ENCODE measurements at regions of chr17 and their contacts with region 1.

Region 1: GRCh38 chr17:60577147-60577915 is 22.7 kb upstream of the PPM1D start:
- DNase-seq: peak in 1 of 2 donors; percentile 26
- ATAC-seq: peak; percentile 93

Region 2: GRCh38 chr17:60637683-60638082 is 60.4 kb after region 1 on chr17:
- intact Hi-C with region 1: loop called in 1 of 2 experiments (anchors 1 kb)
- DNase-seq: no peak
- ATAC-seq: no peak